A673 (cell line): ENCODE measurements at regions of chr12 and their contacts with region 1.

Region 1: GRCh38 chr12:101962486-101962885 is 85.1 kb downstream of the DRAM1 start:
- DNase-seq: no peak
- H3K4me3 ChIP-seq: no peak overlapping the region
- H3K27ac ChIP-seq: no peak overlapping the region
- H3K4me1 ChIP-seq: no peaks in the 10 kb centered on the region
- H3K27me3 ChIP-seq: no peaks in the 10 kb centered on the region
- CTCF ChIP-seq: no peak

Region 2: GRCh38 chr12:101501410-101501995 is 461.0 kb before region 1 on chr12:
- CTCF ChIA-PET with region 1: no interaction called
- POLR2A ChIA-PET with region 1: no interaction called
- intact Hi-C with region 1: no loop called
- DNase-seq: no peak
- H3K4me3 ChIP-seq: no peak overlapping the region
- H3K27ac ChIP-seq: no peak overlapping the region
- H3K4me1 ChIP-seq: no peaks in the 10 kb centered on the region
- H3K27me3 ChIP-seq: peaks cover 28% of the 10 kb centered on the region
- CTCF ChIP-seq: no peak

Region 3: DNA sequence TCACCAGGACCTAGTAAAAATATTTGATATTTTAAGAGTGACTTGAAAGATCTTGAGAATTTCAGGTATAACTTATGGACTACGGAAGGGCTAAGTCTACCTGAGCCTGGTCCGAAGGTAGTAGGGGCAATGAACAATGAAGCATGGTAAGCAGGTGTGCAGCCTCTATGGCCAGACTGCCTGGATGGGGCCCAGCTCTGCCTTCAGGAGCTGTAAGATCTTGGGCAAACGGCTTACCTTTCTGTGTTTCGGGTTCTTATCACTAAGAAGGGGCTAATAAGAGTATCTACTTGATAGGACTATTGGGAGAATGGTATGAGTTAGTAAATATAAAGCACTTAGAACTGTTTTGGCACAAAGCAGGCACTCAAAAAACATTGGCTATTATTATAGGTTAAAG is 118.4 kb after region 1 on chr12:
- CTCF ChIA-PET with region 1: no interaction called
- POLR2A ChIA-PET with region 1: interaction called, 11 read pairs
- intact Hi-C with region 1: no loop called
- DNase-seq: no peak
- H3K4me3 ChIP-seq: no peak overlapping the region
- H3K27ac ChIP-seq: no peak overlapping the region
- H3K4me1 ChIP-seq: no peaks in the 10 kb centered on the region
- H3K27me3 ChIP-seq: no peaks in the 10 kb centered on the region
- CTCF ChIP-seq: no peak